ENCODE measurements at regions of chr2 and their contacts with region 1.

Region 1: GRCh38 chr2:44578421-44579135 is 216.8 kb downstream of the CAMKMT start:
- DNase-seq: peak; percentile 97
- H3K4me3 Mint-ChIP-seq: peak overlapping the region; percentile 63
- H3K27ac Mint-ChIP-seq: peak overlapping the region; percentile 17
- H3K4me1 Mint-ChIP-seq: peaks cover 46% of the 10 kb centered on the region
- H3K27me3 Mint-ChIP-seq: no peaks in the 10 kb centered on the region
- CTCF ChIP-seq: no peak

Region 2: DNA sequence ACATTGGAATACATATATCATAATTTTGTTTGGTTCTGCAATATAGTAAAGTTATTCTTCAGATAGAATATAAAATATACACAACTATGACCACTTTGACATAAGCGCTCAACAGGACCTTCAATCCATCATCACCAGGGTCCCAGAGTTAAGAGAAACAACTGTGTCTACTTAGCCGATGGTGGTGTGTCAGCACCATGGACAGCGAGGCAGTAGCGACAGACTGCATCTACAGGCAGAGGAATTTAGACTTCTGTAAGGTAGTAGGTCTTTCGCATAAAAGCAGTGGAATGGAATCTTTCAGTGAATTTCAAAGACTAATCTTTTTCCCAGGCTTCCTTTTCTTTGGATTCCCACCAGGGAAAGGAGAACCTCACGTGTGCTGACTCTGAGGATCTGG is 562.3 kb before region 1 on chr2:
- CTCF ChIA-PET with region 1: no interaction called
- POLR2A ChIA-PET with region 1: no interaction called
- intact Hi-C with region 1: no loop called
- DNase-seq: peak; percentile 61
- H3K4me3 Mint-ChIP-seq: no peak overlapping the region
- H3K27ac Mint-ChIP-seq: no peak overlapping the region
- H3K4me1 Mint-ChIP-seq: no peaks in the 10 kb centered on the region
- H3K27me3 Mint-ChIP-seq: peaks cover 34% of the 10 kb centered on the region
- CTCF ChIP-seq: no peak

Region 3: DNA sequence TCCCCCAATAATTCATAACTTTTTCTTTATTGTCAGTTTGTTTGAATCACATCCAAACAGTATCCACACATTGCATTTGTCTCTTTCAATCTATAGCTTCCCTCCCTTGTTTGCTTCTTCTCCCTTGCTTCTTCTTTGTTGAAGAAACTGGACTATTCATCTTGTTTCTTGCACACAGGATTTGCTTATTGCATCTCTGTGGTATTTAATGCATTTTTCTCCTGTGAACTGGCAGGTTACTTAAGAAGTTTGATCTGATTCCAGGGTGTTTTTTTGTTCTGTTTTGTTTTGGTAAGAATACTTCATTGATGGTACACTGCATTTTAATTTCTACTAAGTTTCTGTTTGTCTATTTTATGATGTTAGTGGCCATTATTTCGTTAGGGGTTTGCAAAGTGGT is 50.0 kb before region 1 on chr2:
- CTCF ChIA-PET with region 1: interaction called, 3 read pairs
- POLR2A ChIA-PET with region 1: no interaction called
- intact Hi-C with region 1: loop called (anchors 2 kb)
- DNase-seq: peak; percentile 58
- H3K4me3 Mint-ChIP-seq: peak overlapping the region; percentile 52
- H3K27ac Mint-ChIP-seq: peak overlapping the region; percentile 36
- H3K4me1 Mint-ChIP-seq: peaks cover 28% of the 10 kb centered on the region
- H3K27me3 Mint-ChIP-seq: no peaks in the 10 kb centered on the region
- CTCF ChIP-seq: no peak

Region 4: DNA sequence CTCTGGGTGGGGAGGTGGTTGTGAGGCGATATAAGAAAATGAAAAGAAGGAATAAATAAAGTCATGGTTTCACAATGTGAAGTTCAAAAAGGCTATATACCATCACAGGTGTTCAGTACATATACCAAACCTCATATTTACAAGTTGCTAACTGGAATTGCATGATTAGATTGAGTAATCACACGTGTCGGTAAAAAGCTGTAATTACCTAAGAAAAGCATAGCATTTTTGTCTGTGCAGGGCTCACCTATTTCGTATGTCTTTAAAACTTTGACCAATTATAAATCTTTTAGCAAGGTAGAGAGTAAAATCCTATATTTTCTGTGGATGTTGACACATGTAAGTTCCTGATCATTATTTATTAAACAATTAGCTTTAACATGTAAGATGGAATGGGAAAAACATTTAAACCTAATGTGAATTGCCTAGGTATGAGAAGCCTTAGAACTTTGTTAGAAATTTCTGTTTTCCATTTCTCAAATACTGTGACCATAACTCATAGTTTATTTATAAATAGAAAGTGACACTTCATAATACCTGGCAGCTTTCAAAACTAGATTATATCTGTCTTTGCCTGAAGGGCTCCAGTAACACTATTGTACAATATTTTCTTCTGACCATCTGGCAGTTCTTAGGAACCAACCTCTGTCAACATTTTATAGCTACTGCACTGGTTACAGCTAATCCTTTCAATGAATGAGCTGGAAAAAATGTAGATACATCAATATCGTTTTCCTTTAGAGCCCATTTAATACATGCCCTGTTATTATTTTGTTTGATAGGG is 20.4 kb after region 1 on chr2:
- CTCF ChIA-PET with region 1: interaction called, 3 read pairs
- POLR2A ChIA-PET with region 1: interaction called, 14 read pairs
- intact Hi-C with region 1: no loop called
- DNase-seq: peak; percentile 13
- H3K4me3 Mint-ChIP-seq: no peak overlapping the region
- H3K27ac Mint-ChIP-seq: peak overlapping the region; percentile 16
- H3K4me1 Mint-ChIP-seq: peaks cover 7% of the 10 kb centered on the region
- H3K27me3 Mint-ChIP-seq: no peaks in the 10 kb centered on the region
- CTCF ChIP-seq: no peak

Region 5: DNA sequence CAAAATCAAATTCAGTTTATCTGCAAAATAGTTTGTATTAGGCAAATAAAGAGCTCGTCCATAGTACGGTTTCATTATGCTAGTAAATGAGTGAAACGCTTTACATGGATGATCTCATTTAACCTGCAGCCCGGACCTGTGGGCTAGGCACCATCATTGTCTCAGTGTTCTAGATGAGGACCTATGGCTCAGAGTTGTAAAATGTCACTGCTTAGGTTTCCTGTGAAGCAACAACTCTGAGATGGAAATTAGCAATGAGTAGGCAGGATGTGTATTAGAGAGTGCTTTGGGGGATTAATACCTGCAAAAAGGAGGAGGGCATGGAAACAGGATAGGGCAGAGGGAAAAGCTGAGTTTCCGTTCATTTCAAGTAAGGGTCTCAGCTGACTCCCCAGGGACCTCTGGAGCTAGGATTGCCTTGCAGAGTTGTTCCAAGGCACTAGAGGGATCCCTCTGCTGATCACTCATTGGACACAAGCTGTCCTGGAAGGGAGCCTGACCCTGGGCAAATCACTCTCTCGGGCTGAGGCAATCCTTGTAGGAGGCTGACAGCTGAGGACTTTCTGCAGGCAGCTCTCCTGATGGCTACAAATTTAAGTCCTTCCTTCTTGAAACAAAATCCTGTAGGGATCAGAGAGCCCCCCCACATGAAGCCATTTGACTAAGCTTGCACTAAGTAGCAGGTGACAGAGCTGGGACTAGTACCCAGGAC is 489.4 kb after region 1 on chr2:
- CTCF ChIA-PET with region 1: no interaction called
- POLR2A ChIA-PET with region 1: no interaction called
- intact Hi-C with region 1: no loop called
- DNase-seq: peak; percentile 43
- H3K4me3 Mint-ChIP-seq: no peak overlapping the region
- H3K27ac Mint-ChIP-seq: no peak overlapping the region
- H3K4me1 Mint-ChIP-seq: peaks cover 9% of the 10 kb centered on the region
- H3K27me3 Mint-ChIP-seq: no peaks in the 10 kb centered on the region
- CTCF ChIP-seq: no peak

Measured in MCF 10A (cell line).